Head of caudate nucleus (tissue), 42 donors: ENCODE measurements at regions of chr12 and their contacts with region 1.

Region 1: DNA sequence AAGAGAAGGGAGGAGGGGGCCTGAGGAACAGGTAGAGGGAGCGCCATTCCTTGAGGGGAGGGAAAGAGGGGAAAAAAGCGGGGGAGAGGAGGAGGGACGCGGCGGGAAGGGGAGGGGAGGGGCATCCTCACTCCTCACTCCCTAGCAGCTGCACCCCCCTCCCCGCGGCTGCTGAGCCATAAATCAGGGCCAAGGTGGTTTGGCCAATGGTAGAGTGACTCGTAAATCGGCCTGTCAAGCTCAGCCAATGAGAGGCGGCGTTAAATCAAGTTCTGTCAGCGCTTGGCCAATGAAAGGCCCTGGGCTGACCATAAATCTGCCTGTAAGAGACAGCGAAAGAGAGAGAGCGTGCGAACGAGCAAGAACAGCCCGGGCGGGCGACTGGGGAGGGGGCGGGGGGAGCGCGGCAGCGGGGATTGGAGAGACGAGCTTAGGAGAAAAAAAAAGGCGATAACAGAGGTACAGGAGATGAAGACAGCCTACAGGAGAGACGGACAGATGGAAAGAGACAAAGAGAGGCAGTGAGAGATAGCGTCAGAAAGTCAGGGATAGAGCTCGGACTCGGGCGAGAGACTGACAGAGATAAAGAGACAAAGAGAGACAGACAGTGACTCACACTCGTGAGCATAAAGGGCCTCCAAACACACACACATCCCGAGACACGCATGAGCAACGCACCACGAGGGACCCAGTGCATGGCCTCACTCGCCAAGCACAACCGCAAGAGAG is 5.1 kb downstream of the GPR84 start:
- DNase-seq: peak; percentile 93 to 99 (median 98)

Region 2: DNA sequence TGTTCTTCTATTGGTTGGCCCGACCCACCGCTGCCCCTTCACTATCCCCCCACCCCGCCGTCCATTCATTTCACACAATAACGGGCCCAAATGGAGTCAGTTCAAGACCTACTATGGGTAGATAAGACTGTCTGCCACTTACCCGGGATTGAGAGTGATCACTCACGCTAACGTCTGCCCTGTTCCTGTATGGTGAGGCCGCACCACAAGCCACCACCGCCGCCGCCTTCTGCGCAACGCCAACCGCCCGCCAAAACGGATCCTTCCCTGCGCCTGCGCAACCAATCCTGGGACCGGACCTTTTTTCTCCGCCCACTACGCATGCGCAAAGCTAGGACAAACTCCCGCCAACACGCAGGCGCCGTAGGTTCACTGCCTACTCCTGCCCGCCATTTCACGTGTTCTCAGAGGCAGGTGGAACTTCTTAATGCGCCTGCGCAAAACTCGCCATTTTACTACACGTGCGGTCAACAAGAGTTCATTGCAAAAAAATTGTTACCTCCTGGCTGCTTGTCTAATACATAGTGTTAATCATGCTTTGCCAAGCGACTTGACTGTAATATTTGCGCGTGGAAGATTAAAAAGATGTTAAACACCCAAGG is 79.2 kb before region 1 on chr12 and contains the start of gene CBX5:
- intact Hi-C with region 1: loop called (anchors 1 kb)
- DNase-seq: peak; percentile 89 to 99 (median 96)

Region 3: DNA sequence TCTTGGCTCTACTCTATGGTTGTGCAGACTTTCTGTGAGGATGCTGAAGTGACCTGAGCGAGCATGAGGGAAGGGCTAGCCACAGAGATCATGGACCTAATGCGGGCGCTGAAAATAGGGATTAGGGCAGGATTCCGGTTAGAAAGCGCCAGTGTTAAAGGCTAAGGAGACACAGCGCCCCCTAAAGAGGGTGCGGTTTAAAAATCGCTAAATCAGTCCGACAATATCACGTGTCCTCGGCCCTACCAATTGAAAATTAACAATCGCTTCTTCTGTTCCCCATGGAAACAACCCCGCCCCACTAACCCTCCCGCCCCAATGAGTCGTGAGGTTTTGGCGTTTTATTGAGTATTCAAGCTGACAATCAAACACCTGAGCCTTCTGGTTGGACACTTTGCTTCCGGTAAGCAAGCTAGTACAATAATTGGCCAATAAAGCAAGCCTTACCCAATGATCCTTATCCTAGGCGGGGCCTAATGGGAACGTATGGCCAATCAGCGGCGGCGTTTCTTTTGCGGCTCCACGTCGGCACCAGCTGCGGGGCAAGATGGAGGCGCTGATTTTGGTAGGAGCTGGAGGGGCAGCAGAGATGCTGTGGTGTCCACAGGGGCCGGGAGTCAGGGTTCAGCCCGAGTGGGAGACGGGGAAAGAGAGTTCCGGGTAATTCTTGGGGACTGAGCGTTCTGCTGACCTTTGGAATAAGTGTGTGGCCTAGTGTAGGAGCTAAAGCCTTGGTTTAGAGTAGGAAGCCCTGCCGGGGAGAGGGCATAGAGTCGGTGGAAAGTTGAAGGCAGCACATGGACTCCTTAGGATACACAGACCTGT is 34.4 kb before region 1 on chr12 and contains the start of gene COPZ1:
- intact Hi-C with region 1: loop called (anchors 2 kb)
- DNase-seq: peak; percentile 91 to 99 (median 96)

Region 4: GRCh38 chr12:54509617-54510016 is 150.4 kb after region 1 on chr12:
- intact Hi-C with region 1: no loop called
- DNase-seq: no peak